ENCODE measurements at regions of chr15 and their contacts with region 1.

Region 1: GRCh38 chr15:74937596-74938296 is at the start of gene COX5A:
- DNase-seq: peak; percentile 96
- ATAC-seq: peak; percentile 96
- H3K4me3 Mint-ChIP-seq: peak within 1 kb of the TSS; percentile 88
- H3K27ac Mint-ChIP-seq: peak within 1 kb of the TSS; percentile 91
- H3K4me1 Mint-ChIP-seq: peaks cover 31% of the 10 kb centered on the region
- H3K27me3 Mint-ChIP-seq: no peaks in the 10 kb centered on the region
- total RNA-seq, gene COX5A: 313 to 319 TPM

Region 2: DNA sequence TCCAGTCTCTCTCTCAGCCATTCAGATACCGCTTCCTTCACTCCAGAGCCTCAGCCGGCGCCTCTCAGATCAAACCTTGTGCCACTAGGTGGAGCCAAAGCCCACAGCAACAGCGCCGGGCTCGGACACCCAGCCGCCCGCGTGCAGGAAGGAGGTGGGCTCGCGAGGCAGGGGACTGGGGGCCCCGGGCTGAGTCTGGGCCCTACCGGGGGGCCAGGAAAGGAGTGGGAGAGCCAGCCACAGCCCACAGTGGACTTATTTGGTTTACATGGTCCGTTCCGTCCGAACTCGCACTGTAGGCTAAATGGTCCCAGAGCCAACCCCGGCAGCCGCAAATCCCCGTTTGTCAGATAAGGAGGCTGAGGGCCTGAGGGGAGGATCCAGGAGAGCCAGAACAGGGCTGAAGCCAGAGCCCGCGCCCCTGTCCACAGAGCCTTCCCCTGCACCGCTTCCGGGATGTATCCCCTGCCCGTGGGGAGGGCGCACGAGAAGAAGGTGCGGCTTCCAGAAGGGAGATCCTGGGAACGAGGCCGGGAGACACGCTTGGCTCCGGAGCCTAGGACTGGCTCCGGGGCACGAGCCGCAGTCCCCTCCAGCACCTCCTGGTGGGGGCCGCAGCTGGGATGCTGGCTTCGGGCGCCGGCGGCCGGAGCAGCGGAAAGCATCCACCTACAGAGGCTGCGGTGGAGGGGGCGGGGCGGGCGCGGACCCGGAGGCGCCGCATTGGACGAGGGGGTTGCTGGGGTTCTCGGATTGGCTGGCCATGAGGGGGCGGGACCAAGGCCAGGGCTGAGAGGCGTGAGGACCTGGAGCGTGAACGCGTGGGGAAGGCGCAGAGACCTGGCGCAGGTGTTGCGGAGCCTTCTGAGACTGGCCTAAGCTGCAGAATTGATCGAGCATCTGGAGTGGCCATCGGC is 563.8 kb before region 1 on chr15:
- CTCF ChIA-PET with region 1: no interaction called
- POLR2A ChIA-PET with region 1: no interaction called
- intact Hi-C with region 1: loop called in 1 of 2 experiments (anchors 5 kb)
- DNase-seq: peak; percentile 97
- ATAC-seq: peak; percentile 84
- H3K4me3 Mint-ChIP-seq: peak overlapping the region; percentile 76
- H3K27ac Mint-ChIP-seq: no peak overlapping the region
- H3K4me1 Mint-ChIP-seq: peaks cover 31% of the 10 kb centered on the region
- H3K27me3 Mint-ChIP-seq: peaks cover 7% of the 10 kb centered on the region

Region 3: GRCh38 chr15:74384854-74385643 is 552.7 kb before region 1 on chr15:
- CTCF ChIA-PET with region 1: no interaction called
- POLR2A ChIA-PET with region 1: no interaction called
- intact Hi-C with region 1: no loop called
- DNase-seq: peak; percentile 79
- ATAC-seq: peak; percentile 64
- H3K4me3 Mint-ChIP-seq: peak overlapping the region; percentile 20
- H3K27ac Mint-ChIP-seq: peak overlapping the region; percentile 97
- H3K4me1 Mint-ChIP-seq: peaks cover 61% of the 10 kb centered on the region
- H3K27me3 Mint-ChIP-seq: no peaks in the 10 kb centered on the region

Region 4: DNA sequence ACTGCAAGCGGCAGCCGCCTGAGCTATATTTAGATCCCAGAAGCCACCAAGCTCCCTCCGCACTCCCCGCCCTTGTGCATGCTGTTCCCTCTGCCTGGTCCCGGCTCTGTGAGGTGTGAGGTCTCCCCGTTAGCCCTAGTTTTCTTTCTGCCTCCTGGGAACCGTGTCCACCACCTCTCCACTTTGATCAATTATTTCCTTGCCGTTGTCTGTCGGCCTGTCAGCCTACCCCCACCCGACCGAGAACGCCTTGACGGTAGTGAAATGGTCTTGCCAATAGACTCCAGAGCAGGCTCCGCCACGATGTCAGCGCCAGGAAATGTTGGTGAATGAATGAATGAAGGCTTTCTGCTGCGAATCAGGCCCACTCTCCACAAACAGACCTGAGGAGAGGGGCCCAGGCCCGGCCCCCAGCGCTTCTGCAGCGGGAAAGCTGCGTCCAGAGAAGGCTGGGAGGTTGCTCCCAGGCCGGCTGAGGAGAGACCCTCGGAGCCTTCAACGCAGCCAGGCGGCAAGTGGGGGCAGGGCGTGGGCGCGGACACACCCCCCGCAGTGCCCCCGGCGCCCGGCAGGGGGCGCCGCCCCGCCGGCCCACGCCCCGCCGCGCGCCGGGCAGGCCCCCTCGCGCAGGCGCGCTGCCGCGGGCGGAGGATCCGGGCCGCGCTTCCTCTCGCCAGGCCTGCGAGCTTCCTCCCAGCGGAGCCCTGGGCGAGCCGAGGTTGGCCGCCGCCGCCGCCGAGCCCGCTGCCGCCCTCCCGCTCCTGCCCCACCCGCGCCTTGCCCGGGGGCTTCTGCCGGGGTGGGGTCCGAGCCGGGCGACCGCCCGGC is 156.1 kb before region 1 on chr15 and contains the start of gene CSK:
- CTCF ChIA-PET with region 1: interaction called, 3 read pairs
- POLR2A ChIA-PET with region 1: interaction called, 3 read pairs
- intact Hi-C with region 1: loop called (anchors 1 to 5 kb)
- DNase-seq: peak; percentile 84
- ATAC-seq: peak; percentile 27
- H3K4me3 Mint-ChIP-seq: peak within 1 kb of the TSS; percentile 89
- H3K27ac Mint-ChIP-seq: peak within 1 kb of the TSS; percentile 100
- H3K4me1 Mint-ChIP-seq: peaks cover 56% of the 10 kb centered on the region
- H3K27me3 Mint-ChIP-seq: no peaks in the 10 kb centered on the region
- total RNA-seq, gene CSK: 229 to 272 TPM

Region 5: DNA sequence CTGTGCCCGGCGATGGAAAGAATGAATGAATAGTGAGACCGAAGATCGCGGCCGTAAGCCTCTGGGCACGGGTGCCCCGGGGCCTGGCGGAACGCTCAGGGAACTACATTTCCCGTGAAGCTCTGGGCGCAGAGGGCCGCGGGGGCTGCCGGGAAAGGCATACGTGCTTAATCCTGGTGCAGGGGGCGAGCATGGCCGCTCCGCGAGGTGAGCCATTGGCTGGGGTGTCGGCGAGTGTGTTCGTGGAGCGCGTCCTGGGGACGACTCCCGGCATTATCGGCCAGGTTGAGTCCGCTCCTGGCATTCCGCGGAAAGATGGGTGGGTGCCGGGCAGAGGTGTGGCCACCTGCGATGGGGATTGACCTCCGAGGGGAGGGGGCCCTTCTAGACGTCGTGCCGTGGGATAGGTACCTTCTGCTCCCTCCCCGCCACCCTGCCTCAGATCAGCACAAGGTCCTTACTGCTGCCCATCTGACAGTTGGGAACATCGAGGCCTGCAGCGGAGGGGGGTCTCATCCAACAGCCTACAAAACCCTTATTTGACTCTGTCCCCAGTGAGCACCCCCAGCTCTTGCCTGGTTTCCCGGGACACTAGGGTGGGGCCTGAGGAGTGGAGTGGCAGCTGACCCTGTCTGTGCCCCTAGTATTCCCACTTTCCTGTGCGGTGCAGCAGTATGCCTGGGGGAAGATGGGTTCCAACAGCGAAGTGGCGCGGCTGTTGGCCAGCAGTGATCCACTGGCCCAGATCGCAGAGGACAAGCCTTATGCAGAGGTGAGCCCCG is 47.7 kb before region 1 on chr15 and contains the start of gene MPI:
- CTCF ChIA-PET with region 1: interaction called, 4 read pairs
- POLR2A ChIA-PET with region 1: interaction called, 6 read pairs
- intact Hi-C with region 1: loop called in 1 of 2 experiments (anchors 1 kb)
- DNase-seq: peak; percentile 95
- ATAC-seq: peak; percentile 98
- H3K4me3 Mint-ChIP-seq: peak within 1 kb of the TSS; percentile 73
- H3K27ac Mint-ChIP-seq: peak within 1 kb of the TSS; percentile 86
- H3K4me1 Mint-ChIP-seq: peaks cover 46% of the 10 kb centered on the region
- H3K27me3 Mint-ChIP-seq: no peaks in the 10 kb centered on the region
- total RNA-seq, gene MPI: 75.7 to 93.3 TPM

Region 6: DNA sequence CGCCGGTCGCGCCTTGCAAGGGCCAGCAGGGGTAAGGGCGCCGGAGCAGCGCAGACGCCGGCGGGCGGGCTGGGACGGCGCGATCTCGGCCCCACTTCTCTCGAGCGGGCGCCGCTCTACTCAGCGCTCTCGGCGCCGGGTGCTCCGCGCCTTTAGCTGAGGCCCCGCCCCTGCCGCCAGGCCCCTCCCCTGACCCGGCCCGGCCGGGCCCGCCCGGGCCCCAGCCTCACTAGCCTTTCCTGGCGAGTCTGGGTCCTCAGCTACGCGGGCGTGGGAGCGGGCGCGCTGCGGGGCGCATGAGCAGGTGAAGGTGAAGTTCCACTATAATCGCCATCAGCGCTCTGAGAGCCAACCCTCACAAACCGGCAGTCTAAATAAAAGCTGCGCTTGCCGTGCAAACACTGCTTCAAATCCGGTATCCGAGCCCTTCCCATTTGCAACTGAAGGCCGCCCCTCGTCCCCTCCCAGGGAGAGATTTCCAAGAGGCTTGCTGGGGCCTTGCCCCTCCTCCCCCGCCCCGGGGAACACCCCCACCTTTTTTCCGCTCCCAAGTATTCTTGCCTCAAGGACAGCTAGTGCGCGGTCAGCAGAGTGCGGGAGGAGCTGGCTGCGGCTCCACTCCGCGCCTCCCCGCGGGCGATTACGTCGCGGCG is 19.0 kb after region 1 on chr15 and contains the start of gene RPP25:
- CTCF ChIA-PET with region 1: interaction called, 14 read pairs
- POLR2A ChIA-PET with region 1: interaction called, 3 read pairs
- intact Hi-C with region 1: loop called in 1 of 2 experiments (anchors 1 kb)
- DNase-seq: peak; percentile 85
- ATAC-seq: peak; percentile 84
- H3K4me3 Mint-ChIP-seq: peak within 1 kb of the TSS; percentile 65
- H3K27ac Mint-ChIP-seq: no peak within 1 kb of the TSS
- H3K4me1 Mint-ChIP-seq: peaks cover 46% of the 10 kb centered on the region
- H3K27me3 Mint-ChIP-seq: peaks cover 25% of the 10 kb centered on the region
- total RNA-seq, gene RPP25: 5.4 to 6.2 TPM

Region 7: GRCh38 chr15:74978503-74978902 is 40.8 kb after region 1 on chr15:
- CTCF ChIA-PET with region 1: no interaction called
- POLR2A ChIA-PET with region 1: no interaction called
- intact Hi-C with region 1: no loop called
- DNase-seq: peak; percentile 85
- ATAC-seq: peak; percentile 89
- H3K4me3 Mint-ChIP-seq: no peak overlapping the region
- H3K27ac Mint-ChIP-seq: no peak overlapping the region
- H3K4me1 Mint-ChIP-seq: peaks cover 16% of the 10 kb centered on the region
- H3K27me3 Mint-ChIP-seq: peaks cover 11% of the 10 kb centered on the region

Region 8: DNA sequence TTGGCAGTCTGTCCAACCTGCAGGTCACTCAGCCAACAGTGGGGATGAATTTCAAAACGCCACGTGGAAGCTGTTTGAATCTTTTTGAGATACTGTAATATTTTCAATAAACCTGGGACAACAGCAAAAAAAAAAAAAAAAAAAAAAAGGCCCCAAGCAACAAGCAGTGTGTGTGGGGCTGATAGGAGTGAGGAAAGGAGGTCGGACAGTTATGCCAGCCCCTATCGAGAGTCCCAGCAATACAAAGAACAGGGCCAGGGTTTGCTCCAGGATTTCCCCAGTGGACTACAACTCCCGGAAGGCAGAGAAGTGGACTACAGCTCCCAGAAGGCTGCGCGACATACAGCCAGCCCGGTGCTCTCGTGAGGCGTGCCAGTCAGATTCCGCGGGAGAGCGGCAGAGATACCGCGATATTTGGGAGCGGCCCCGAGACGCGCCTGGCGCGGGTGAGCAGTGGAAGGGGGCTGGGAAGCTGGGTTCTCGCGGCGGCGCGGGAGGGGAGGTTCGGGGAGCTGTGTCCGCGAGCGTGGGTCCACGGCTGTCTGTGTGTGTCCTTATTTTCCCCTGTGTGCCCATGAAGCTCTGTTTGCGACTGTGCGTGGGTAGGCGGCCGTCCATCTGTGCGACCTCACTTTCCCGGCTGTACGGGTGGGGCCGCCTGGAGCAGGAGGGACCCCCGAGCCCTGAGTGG is 85.6 kb after region 1 on chr15 and contains the start of gene PPCDC:
- CTCF ChIA-PET with region 1: no interaction called
- POLR2A ChIA-PET with region 1: interaction called, 4 read pairs
- intact Hi-C with region 1: loop called in 1 of 2 experiments (anchors 1 kb)
- DNase-seq: peak; percentile 97
- ATAC-seq: peak; percentile 100
- H3K4me3 Mint-ChIP-seq: peak within 1 kb of the TSS; percentile 89
- H3K27ac Mint-ChIP-seq: peak within 1 kb of the TSS; percentile 95
- H3K4me1 Mint-ChIP-seq: peaks cover 13% of the 10 kb centered on the region
- H3K27me3 Mint-ChIP-seq: no peaks in the 10 kb centered on the region
- total RNA-seq, gene PPCDC: 23.3 to 24.0 TPM

Region 9: GRCh38 chr15:76905013-76905839 is 1967.5 kb after region 1 on chr15 and contains the start of gene SCAPER:
- CTCF ChIA-PET with region 1: no interaction called
- POLR2A ChIA-PET with region 1: no interaction called
- intact Hi-C with region 1: no loop called
- DNase-seq: peak; percentile 96
- ATAC-seq: peak; percentile 92
- H3K4me3 Mint-ChIP-seq: peak within 1 kb of the TSS; percentile 87
- H3K27ac Mint-ChIP-seq: peak within 1 kb of the TSS; percentile 92
- H3K4me1 Mint-ChIP-seq: peaks cover 34% of the 10 kb centered on the region
- H3K27me3 Mint-ChIP-seq: no peaks in the 10 kb centered on the region
- total RNA-seq, gene SCAPER: 25.9 to 35.2 TPM